ENCODE measurements at regions of chrX and their contacts with region 1.

Region 1: DNA sequence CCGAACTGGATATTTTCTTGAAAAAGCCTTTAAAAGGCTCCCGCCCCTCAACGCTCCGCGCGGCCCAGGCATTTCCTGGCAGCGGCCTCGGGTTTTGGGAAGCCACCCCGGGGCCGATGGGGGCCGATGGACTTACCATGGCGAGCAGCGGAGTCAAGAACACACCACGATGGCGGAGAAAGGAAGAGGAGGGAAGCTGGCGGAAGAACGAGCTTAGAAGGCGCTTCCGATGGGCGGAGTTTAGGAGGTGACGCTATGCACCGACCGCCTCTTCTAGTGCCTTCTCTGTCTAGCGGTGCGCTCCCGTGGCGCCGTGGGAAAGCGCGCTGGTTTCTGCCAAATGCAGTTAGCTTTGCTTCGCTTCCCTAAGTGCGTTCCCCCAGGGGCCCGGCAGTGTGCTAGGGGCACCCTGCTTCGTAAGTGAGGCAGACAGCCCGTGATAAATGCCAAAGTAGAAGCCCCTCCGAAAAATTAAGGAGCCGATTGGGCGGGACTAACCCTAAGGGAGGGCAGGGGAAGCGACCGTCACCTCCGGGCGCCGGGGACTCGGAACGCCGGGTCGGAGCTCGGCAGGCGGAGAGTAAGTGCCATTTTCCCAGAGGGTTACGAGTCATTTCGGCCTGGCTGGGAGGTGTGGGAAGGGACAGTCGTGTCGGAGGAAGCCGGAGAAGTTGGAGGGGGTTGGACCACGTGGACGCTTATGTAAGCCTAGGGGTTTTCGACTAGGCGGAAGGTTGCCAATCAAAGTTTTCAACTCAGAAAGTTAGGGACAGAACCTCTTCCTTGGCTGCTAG is at the start of gene RPL39:
- DNase-seq: peak; percentile 83

Region 2: DNA sequence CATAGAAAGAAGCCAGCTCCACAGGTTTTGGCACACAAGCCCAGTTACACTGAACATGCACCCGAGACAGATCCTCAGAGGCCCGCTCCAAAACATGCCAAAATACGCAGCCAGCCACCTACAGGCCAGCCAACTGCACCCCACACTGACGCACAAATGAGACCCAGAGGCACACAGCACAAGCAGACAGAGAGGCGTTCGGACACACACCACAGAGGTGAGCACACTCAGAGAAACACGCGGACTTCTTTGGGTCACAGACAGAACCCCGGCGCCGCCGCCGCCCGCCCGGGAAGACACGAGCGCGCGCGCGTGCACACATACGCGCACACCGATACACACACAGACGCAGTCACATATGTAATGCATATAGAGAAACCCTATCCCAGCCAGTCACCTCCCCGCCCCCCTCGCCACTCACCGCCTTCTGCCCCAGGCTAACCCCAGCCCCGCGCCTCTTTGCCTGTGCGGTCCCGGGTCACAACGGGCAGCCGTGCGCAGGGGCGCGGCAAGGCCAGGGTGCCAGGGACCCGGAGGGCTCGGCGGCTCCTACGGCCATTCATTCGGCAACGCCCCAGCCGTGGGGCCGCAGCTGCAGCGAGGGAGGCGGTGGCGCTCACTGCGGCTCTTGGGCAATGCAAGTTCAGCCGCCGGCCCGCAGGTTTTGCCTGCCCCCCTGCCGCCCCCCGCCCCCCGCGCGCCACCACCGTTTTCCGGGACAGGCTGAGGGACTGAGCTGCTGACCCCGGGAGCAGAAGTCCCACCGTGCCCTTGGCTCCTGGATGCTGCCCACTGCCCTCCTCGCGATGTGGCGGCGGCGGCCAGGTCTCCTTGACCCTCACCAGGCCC is 99.2 kb before region 1 on chrX:
- CTCF ChIA-PET with region 1: no interaction called
- POLR2A ChIA-PET with region 1: interaction called, 11 read pairs
- DNase-seq: peak; percentile 57

Region 3: GRCh38 chrX:119775517-119776238 is 16.0 kb before region 1 on chrX:
- CTCF ChIA-PET with region 1: interaction called, 3 read pairs
- POLR2A ChIA-PET with region 1: interaction called, 22 read pairs
- DNase-seq: no peak

Region 4: GRCh38 chrX:119852382-119853353 is 61.0 kb after region 1 on chrX and contains the start of gene UPF3B:
- CTCF ChIA-PET with region 1: no interaction called
- POLR2A ChIA-PET with region 1: interaction called, 52 read pairs
- DNase-seq: peak; percentile 99

Region 5: GRCh38 chrX:119887721-119888425 is 96.2 kb after region 1 on chrX:
- CTCF ChIA-PET with region 1: no interaction called
- POLR2A ChIA-PET with region 1: interaction called, 23 read pairs
- DNase-seq: peak; percentile 93

Region 6: DNA sequence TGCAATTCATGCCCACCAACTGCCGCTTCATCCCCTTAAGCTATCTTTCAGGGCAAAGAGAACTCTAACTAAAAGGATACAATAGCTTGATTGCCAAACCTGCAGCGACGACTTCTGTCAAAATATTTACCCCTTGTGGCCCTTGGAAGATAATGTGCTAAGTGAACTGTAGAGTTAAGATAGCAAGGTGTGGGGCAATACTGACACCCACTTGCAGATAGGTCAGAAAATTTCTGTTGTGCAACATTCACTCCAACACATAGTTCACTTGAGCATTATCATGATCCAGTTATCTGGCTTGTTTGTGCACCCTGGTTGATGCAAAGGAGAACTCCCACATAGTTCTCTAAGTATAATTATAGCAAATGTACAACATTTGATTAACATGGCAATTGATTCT is 230.3 kb after region 1 on chrX:
- CTCF ChIA-PET with region 1: no interaction called
- POLR2A ChIA-PET with region 1: no interaction called
- DNase-seq: no peak